ENCODE measurements at regions of chr14 and their contacts with region 1.

Region 1: DNA sequence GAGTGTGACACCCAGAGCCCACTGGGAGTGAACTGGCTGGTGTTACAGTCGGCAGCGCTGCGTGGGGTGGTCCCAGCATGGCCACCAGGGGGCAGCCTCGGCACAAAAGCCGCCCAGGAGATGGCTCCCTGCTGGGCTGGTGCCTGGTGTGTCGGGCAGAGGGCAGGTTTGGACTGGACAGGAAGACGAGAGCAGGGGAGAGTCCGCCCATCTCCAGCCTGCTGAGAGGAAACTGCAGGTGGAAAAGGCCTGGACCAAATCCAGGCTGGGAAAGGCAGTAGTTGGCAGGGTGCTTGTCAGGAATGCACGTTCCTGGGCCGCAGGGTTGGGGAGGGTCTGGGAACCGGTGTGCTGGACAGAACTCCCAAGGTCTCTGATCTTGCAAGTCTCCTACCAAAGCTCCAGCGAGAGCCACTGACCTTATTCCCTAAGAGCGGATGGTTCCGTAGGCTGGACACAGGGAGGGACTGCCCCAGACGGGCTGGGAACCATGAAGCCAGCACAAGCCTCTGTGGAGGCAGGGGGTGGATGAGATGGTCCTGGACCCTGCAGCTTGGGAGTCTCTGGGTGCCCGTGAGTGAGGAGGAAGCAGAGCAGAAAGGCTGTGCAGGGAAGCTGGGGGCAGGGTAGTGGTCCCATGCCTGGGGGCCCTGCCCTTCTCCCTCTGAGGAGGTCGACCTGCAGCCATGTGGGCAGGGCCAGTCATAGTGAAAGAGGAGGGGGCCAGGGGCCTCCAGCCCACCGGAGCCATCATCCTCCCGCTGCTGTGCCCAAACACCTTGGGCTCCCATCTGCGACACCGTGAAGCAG is 1.8 kb downstream of the AHNAK2 start:
- DNase-seq: peak; percentile 72
- ATAC-seq: peak; percentile 43
- H3K4me3 ChIP-seq: no peak overlapping the region
- H3K27ac ChIP-seq: no peak overlapping the region
- H3K4me1 ChIP-seq: peaks cover 31% of the 10 kb centered on the region
- H3K27me3 ChIP-seq: no peaks in the 10 kb centered on the region
- CTCF ChIP-seq: peak; percentile 97
- POLR2A ChIP-seq: 0 out of 2 replicates have a peak, but pooled peaks have one; percentile 35
- RAD21 ChIP-seq: peak; percentile 96

Region 2: GRCh38 chr14:104895786-104896661 is 80.4 kb before region 1 on chr14:
- CTCF ChIA-PET with region 1: no interaction called
- POLR2A ChIA-PET with region 1: no interaction called
- dilution Hi-C with region 1: no loop called
- in situ Hi-C with region 1: no loop called
- intact Hi-C with region 1: loop called (anchors 1 kb)
- DNase-seq: no peak
- ATAC-seq: no peak
- H3K4me3 ChIP-seq: no peak overlapping the region
- H3K27ac ChIP-seq: no peak overlapping the region
- H3K4me1 ChIP-seq: no peaks in the 10 kb centered on the region; the same call in 1 of the 2 replicates
- H3K27me3 ChIP-seq: peaks cover 5% of the 10 kb centered on the region
- CTCF ChIP-seq: no peak
- POLR2A ChIP-seq: no peak
- RAD21 ChIP-seq: no peak

Region 3: DNA sequence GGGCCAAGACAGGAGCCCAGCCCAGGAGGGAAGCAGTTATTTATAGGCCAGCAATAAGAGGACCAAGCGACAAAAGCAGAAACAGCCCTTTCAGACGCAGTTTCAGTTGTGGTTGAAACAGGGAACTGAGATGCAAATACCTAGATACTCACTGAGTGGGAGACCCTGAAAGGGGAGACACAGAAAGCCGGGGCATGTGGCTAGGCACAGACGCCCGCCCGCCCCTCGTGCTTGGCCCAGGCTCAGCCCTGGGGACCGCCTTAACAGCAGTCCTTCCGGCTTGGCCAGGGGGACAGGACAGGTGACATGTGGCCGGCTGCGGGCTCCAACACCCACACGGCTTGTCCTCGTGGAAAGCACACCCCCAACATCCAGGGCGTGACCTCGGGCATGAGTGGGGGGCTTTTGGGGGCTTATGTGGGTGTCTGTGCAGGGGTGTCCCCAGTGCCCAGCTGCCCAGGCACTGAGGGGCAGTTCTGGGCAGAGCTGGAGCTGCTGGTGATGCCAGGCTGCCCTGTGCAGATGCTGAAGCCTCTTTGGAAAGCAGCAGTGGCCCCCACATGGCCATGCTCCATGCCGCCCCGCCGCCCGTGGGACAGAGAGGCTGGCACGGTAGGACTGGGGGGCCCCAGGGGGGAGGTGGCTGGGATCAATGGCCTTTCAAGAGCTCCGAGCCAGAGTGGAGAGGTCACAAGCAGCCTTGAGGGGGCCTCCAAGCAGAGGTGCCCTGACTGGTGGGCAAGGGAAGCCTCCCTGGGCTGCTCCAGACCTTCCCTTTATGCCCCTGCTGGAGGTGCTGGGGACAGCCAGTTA is 49.6 kb before region 1 on chr14:
- CTCF ChIA-PET with region 1: no interaction called
- POLR2A ChIA-PET with region 1: interaction called, 11 read pairs
- dilution Hi-C with region 1: no loop called
- in situ Hi-C with region 1: no loop called
- intact Hi-C with region 1: loop called (anchors 5 kb)
- DNase-seq: no peak
- ATAC-seq: no peak
- H3K4me3 ChIP-seq: no peak overlapping the region
- H3K27ac ChIP-seq: no peak overlapping the region
- H3K4me1 ChIP-seq: no peaks in the 10 kb centered on the region
- H3K27me3 ChIP-seq: peaks cover 24% of the 10 kb centered on the region; the same call in 1 of the 2 replicates
- CTCF ChIP-seq: no peak
- POLR2A ChIP-seq: no peak
- RAD21 ChIP-seq: no peak

Region 4: GRCh38 chr14:104932676-104933631 is 43.4 kb before region 1 on chr14:
- CTCF ChIA-PET with region 1: no interaction called
- POLR2A ChIA-PET with region 1: no interaction called
- dilution Hi-C with region 1: no loop called
- in situ Hi-C with region 1: loop called (anchors 5 kb)
- intact Hi-C with region 1: loop called (anchors 5 kb)
- DNase-seq: peak; percentile 70
- ATAC-seq: peak; percentile 97
- H3K4me3 ChIP-seq: peak overlapping the region; percentile 55
- H3K27ac ChIP-seq: peak overlapping the region; percentile 16; the same call in 1 of the 2 replicates
- H3K4me1 ChIP-seq: peaks cover 2% of the 10 kb centered on the region; the same call in 1 of the 2 replicates
- H3K27me3 ChIP-seq: peaks cover 57% of the 10 kb centered on the region
- CTCF ChIP-seq: peak; percentile 72
- POLR2A ChIP-seq: no peak
- RAD21 ChIP-seq: peak; percentile 55

Region 5: DNA sequence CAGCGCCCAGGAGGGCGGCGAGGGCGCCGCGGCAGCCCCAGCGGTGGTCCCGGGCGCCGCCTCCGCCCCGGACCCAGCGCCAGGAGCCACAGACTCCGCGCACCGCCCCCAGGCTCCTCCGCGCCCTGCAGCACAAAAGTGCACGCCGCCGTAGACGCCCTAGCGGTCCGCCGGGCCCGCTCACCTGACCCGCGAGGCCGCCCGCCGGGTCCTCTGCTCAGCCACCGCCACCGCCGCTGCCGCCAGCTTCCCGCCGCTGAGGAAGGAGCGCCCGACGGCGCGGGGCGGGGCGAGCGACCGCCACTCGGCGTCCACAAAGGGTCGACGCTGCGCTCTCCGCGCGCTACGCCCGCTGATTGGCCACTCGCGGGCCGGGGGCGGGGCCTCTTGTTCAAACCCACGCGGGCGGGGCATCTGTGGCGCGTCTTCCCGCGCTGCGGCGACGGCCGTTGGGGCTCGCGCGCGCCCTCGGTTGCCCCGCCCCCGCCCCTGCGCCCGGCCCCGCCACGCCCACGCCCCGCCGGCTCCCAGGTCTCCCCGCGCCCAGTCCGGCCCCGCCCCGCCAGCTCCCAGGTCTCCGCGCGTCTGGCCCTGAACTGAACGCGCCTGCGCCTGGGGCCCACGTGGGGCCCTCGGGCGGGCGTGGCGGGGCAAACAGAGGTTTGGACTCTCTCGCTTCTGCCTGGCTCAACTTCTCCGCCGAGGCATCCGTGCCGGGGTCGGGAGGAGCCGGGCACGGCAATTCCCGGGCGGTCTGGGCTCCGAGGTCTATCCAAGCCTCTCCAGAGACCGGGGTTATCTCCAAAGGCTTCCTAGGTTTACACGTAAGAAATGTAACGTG is 44.6 kb after region 1 on chr14 and contains the start of gene CDCA4:
- CTCF ChIA-PET with region 1: no interaction called
- POLR2A ChIA-PET with region 1: no interaction called
- dilution Hi-C with region 1: no loop called
- in situ Hi-C with region 1: no loop called
- intact Hi-C with region 1: loop called (anchors 2 kb)
- DNase-seq: peak; percentile 93
- ATAC-seq: peak; percentile 91
- H3K4me3 ChIP-seq: peak within 1 kb of the TSS; percentile 91
- H3K27ac ChIP-seq: peak within 1 kb of the TSS; percentile 89
- H3K4me1 ChIP-seq: peaks cover 15% of the 10 kb centered on the region
- H3K27me3 ChIP-seq: no peaks in the 10 kb centered on the region
- CTCF ChIP-seq: no peak
- POLR2A ChIP-seq: peak; percentile 84
- RAD21 ChIP-seq: no peak
- total RNA-seq, gene CDCA4: 17.7 and 19.7 TPM in 2 replicates

Region 6: GRCh38 chr14:105045710-105046326 is 69.4 kb after region 1 on chr14:
- CTCF ChIA-PET with region 1: interaction called, 21 read pairs
- POLR2A ChIA-PET with region 1: no interaction called
- dilution Hi-C with region 1: no loop called
- in situ Hi-C with region 1: loop called (anchors 5 kb)
- intact Hi-C with region 1: loop called (anchors 1 kb)
- DNase-seq: peak; percentile 74
- ATAC-seq: peak; percentile 99
- H3K4me3 ChIP-seq: peak overlapping the region; percentile 3; the same call in 1 of the 2 replicates
- H3K27ac ChIP-seq: no peak overlapping the region
- H3K4me1 ChIP-seq: peaks cover 3% of the 10 kb centered on the region; the same call in 1 of the 2 replicates
- H3K27me3 ChIP-seq: peaks cover 10% of the 10 kb centered on the region
- CTCF ChIP-seq: peak; percentile 100
- POLR2A ChIP-seq: peak; percentile 62
- RAD21 ChIP-seq: peak; percentile 100

Region 7: GRCh38 chr14:105086833-105087307 is 110.5 kb after region 1 on chr14:
- CTCF ChIA-PET with region 1: no interaction called
- POLR2A ChIA-PET with region 1: interaction called, 7 read pairs
- dilution Hi-C with region 1: no loop called
- in situ Hi-C with region 1: no loop called
- intact Hi-C with region 1: loop called (anchors 2 kb)
- DNase-seq: peak; percentile 71
- ATAC-seq: peak; percentile 70
- H3K4me3 ChIP-seq: peak overlapping the region; percentile 48
- H3K27ac ChIP-seq: peak overlapping the region; percentile 42
- H3K4me1 ChIP-seq: peaks cover 18% of the 10 kb centered on the region
- H3K27me3 ChIP-seq: no peaks in the 10 kb centered on the region
- CTCF ChIP-seq: peak; percentile 83
- POLR2A ChIP-seq: no peak
- RAD21 ChIP-seq: peak; percentile 73